SK-N-SH (cell line): ENCODE measurements at regions of chr1 and their contacts with region 1.

Region 1: GRCh38 chr1:151098126-151098525 is 27.6 kb downstream of the GABPB2 start:
- DNase-seq: no peak
- H3K4me3 ChIP-seq: no peak overlapping the region
- H3K27ac ChIP-seq: no peak overlapping the region
- H3K4me1 ChIP-seq: no peaks in the 10 kb centered on the region
- H3K27me3 ChIP-seq: no peaks in the 10 kb centered on the region
- CTCF ChIP-seq: no peak
- EP300 ChIP-seq: no peak
- RAD21 ChIP-seq: no peak

Region 2: DNA sequence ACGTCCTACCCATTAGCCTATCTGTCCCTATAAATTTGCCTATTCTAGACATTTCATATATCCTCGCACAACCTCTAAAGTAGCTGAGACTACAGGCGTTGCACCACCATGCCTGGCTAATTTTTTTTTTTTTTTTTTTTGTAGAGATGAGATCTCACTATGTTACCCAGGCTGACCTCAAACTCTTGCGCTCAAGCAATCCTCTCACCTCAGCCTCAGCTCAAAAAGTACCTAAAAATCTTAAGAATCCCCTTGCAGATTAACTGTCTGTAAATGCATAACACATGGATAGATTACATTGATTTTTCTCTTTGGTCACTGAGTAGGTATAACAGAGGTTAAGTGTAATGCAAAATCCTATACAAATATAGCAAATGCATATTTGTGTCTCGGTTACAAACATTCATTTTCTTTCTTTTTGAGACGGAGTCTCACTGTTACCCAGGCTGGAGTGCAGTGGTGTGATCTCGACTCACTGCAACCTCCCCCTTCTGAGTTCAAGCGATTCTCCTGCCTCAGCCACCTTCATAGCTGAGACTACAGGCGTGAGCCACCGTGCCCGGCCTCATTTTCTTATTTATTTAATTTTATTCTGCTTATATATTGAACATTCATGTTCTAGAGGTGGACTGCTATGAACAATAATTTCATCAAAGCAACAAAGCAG is 379.8 kb before region 1 on chr1:
- CTCF ChIA-PET with region 1: no interaction called
- POLR2A ChIA-PET with region 1: no interaction called
- DNase-seq: no peak
- H3K4me3 ChIP-seq: no peak overlapping the region
- H3K27ac ChIP-seq: no peak overlapping the region
- H3K4me1 ChIP-seq: no peaks in the 10 kb centered on the region
- H3K27me3 ChIP-seq: no peaks in the 10 kb centered on the region
- CTCF ChIP-seq: no peak
- EP300 ChIP-seq: no peak
- RAD21 ChIP-seq: no peak

Region 3: GRCh38 chr1:150961799-150962198 is 136.3 kb before region 1 on chr1:
- CTCF ChIA-PET with region 1: no interaction called
- POLR2A ChIA-PET with region 1: no interaction called
- DNase-seq: no peak
- H3K4me3 ChIP-seq: no peak overlapping the region
- H3K27ac ChIP-seq: no peak overlapping the region
- H3K4me1 ChIP-seq: no peaks in the 10 kb centered on the region
- H3K27me3 ChIP-seq: no peaks in the 10 kb centered on the region
- CTCF ChIP-seq: no peak
- EP300 ChIP-seq: no peak
- RAD21 ChIP-seq: no peak

Region 4: GRCh38 chr1:151113877-151114276 is 15.8 kb after region 1 on chr1:
- CTCF ChIA-PET with region 1: interaction called, 20 read pairs
- POLR2A ChIA-PET with region 1: no interaction called
- DNase-seq: no peak
- H3K4me3 ChIP-seq: no peak overlapping the region
- H3K27ac ChIP-seq: no peak overlapping the region
- H3K4me1 ChIP-seq: no peaks in the 10 kb centered on the region
- H3K27me3 ChIP-seq: no peaks in the 10 kb centered on the region
- CTCF ChIP-seq: no peak
- EP300 ChIP-seq: no peak
- RAD21 ChIP-seq: no peak

Region 5: DNA sequence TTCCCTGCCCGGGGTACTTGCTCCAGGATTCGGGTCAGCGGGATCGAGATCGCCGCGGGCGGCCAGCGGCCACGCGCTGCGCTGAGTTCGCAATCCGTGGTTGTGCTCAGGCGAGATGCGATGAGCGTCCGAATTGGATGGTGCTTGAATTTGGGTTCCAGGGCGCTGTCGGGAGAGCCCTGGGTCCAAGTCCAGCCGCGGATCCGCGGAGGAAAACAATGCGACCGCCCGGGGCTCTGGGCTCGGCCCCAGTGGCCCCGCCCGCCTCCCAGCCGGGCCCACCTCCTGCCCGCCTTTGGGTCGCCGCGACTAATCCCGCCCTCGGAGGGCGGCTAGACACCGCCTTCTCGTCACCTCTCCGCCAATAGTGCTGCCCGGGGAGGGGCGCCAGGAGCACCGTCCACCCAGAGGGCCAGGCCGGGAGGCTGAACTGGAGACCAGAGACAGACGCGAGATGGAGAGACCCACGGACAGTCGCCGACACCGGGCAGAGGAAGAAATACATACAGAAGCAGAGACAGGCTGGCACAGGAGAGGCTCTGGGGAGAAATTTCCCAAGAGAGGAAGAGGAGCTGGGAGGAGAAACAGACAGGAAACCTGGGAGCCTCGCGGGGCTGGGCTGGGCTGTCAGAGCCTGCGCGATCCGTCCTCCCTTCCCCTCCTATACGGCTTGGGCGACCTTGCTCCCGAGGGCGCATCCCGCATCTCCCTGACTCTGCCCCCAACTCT is 48.5 kb after region 1 on chr1 and contains the start of gene SEMA6C:
- CTCF ChIA-PET with region 1: interaction called, 12 read pairs
- POLR2A ChIA-PET with region 1: no interaction called
- DNase-seq: peak; percentile 96
- H3K4me3 ChIP-seq: peak within 1 kb of the TSS; percentile 70 to 91
- H3K27ac ChIP-seq: peak within 1 kb of the TSS; percentile 21 to 60; a peak in 2 of 4 replicates
- H3K4me1 ChIP-seq: peaks cover 0 to 21% of the 10 kb centered on the region in 2 experiments; a peak in 1 of 4 replicates
- H3K27me3 ChIP-seq: no peaks in the 10 kb centered on the region
- CTCF ChIP-seq: no peak
- EP300 ChIP-seq: no peak
- RAD21 ChIP-seq: no peak
- polyA plus RNA-seq, gene SEMA6C: 3.1 and 4.0 TPM in 2 replicates

Region 6: GRCh38 chr1:151156515-151156819 is 58.3 kb after region 1 on chr1 and contains the start of gene TNFAIP8L2:
- CTCF ChIA-PET with region 1: interaction called, 113 read pairs
- POLR2A ChIA-PET with region 1: no interaction called
- DNase-seq: no peak
- H3K4me3 ChIP-seq: no peak within 1 kb of the TSS
- H3K27ac ChIP-seq: no peak within 1 kb of the TSS
- H3K4me1 ChIP-seq: no peaks in the 10 kb centered on the region
- H3K27me3 ChIP-seq: no peaks in the 10 kb centered on the region
- CTCF ChIP-seq: no peak
- EP300 ChIP-seq: no peak
- RAD21 ChIP-seq: no peak
- polyA plus RNA-seq, gene TNFAIP8L2: not detected in 2 replicates

Region 7: DNA sequence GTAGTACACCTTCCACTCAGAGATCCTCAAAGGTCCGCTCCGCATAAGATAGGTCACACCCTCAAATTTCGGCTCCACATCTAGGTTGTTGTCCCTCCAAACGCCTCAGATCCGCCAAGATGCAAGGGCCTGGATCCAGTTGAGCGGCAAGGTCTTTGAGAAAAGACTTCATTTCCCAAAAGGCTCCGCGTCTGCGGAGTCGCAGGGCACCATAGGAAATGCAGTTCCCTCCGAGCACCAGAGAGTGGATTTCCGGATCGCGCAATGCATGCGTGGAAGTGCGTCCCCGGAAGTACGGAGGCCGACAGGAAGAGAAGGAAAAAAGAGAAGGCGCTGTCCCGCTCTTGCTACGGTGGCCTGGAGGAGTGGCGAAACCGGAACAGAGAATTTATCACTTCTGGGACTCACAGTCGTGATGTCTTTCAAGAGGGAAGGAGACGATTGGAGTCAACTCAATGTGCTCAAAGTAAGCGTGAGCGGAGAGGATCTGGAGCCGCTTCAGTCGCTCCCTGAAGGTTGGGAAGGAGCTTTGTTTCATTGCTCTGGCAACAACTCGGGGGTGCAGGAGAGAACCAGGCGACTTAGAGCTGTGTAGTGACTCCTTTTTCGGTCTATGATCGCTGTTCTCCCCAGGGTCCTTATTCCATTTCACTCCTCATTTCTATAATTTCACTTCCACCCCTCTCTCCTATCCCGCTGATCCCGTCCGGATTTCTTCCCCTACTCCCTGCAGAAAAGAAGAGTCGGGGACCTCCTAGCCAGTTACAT is 67.8 kb after region 1 on chr1 and contains the starts of genes LYSMD1 and SCNM1:
- CTCF ChIA-PET with region 1: interaction called, 21 read pairs
- POLR2A ChIA-PET with region 1: interaction called, 3 read pairs
- DNase-seq: peak; percentile 88
- H3K4me3 ChIP-seq: peak within 1 kb of the TSS; percentile 84 to 86
- H3K27ac ChIP-seq: peak within 1 kb of the TSS; percentile 76 to 92
- H3K4me1 ChIP-seq: peaks cover 4 to 15% of the 10 kb centered on the region in 2 experiments; a peak in 2 of 4 replicates
- H3K27me3 ChIP-seq: no peaks in the 10 kb centered on the region
- CTCF ChIP-seq: no peak
- EP300 ChIP-seq: peak in 1 of 2 experiments; percentile 34; a peak in 2 of 4 replicates
- RAD21 ChIP-seq: no peak
- polyA plus RNA-seq, gene LYSMD1: 4.5 and 5.1 TPM in 2 replicates
- polyA plus RNA-seq, gene SCNM1: 23.4 and 27.8 TPM in 2 replicates

Region 8: DNA sequence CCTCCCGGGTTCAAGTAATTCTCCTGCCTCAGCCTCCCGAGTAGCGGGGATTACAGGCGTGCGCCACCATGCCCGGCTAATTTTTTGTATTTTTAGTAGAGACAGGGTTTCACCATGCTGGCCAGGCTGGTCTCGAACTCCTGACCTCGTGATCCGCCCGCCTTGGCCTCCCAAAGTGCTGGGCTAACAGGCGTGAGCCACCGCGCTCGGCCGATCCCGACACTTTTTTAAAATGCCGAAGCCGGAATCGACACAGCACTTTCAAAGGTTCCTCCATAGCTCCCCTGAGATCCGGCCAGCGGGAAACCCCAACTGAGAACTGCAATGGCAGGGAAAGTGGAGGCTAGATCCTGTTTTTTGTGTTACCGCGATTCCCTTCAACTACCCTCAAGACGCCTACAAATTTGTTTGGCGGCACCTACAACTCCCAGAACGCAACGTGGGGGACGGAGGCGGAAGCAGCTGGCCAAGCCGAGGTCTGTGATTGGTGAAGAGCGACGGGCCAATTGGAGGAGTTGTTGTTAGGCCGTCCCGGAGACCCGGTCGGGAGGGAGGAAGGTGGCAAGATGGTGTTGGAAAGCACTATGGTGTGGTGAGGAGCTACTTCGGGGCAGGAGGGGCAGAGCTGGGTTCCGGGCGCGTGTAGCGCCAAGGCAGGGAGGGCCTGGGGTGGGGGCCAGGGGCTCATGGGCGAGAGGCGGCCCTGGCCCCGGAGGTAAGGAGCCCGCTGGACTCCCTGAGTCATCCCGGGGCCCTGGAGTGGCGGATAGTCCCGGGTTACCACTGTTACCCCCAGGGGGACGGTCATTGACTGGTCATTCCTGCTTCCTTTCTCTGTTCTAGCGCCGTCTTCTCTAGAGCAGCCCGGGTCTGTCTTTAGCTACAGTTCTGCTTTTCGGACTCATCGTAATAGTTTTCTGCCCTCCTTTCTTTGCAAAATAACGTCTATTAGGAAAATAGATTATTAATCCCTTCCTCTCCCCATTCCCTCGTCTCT is 156.4 kb after region 1 on chr1 and contains the start of gene PSMD4:
- CTCF ChIA-PET with region 1: interaction called, 23 read pairs
- POLR2A ChIA-PET with region 1: interaction called, 3 read pairs
- DNase-seq: peak; percentile 97
- H3K4me3 ChIP-seq: peak within 1 kb of the TSS; percentile 58 to 76
- H3K27ac ChIP-seq: peak within 1 kb of the TSS; percentile 72 to 87
- H3K4me1 ChIP-seq: peaks cover 0 to 4% of the 10 kb centered on the region in 2 experiments; a peak in 1 of 4 replicates
- H3K27me3 ChIP-seq: no peaks in the 10 kb centered on the region
- CTCF ChIP-seq: no peak
- EP300 ChIP-seq: no peak
- RAD21 ChIP-seq: no peak
- polyA plus RNA-seq, gene PSMD4: 419 and 518 TPM in 2 replicates